ENCODE measurements at regions of chrX and their contacts with region 1.

Region 1: DNA sequence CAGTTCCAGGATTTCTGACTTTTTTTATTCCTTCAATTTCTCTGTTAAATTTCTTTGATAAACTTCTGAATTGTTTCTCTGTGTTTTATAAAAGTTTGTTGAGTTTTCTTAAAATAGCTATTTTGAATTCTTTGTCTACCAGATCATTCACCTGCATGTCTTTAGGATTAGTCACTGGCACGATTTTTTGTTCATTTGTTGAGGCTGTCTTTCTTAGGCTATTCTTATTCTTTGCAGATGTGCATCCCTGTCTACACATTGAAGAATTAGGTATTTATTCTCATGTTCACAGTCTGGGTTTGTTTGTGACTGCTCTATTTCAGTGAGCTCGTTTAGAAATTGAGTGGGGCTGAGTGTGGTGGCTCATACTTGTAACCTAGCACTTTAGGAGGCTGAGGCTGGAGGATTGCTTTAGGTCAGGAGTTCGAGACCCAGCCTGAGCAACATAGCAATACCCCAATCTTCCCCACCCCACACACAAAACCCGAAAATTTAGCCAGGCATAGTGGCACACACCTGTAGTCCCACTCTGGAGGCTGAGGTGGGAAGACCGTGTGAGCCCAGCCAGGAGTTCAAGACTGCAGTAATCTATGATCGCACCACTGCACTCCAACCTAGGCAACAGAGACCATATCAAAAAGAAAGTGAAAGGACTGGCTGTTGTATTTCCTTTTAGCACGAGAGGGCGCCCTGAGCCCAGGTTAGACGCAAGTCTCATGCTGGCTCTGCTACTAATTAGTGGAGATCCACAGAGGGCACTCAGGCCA is 42.0 kb downstream of the F8 start:
- DNase-seq: peak; percentile 45
- ATAC-seq: peak; percentile 98
- H3K4me3 ChIP-seq: peak overlapping the region; percentile 25 to 51
- H3K27ac ChIP-seq: no peak overlapping the region
- H3K4me1 ChIP-seq: peaks cover 0 to 10% of the 10 kb centered on the region in 2 experiments; a peak in 1 of 4 replicates
- H3K27me3 ChIP-seq: no peaks in the 10 kb centered on the region
- CTCF ChIP-seq: peak; percentile 51 to 95 (median 66)
- POLR2A ChIP-seq: no peak
- RAD21 ChIP-seq: peak; percentile 92

Region 2: DNA sequence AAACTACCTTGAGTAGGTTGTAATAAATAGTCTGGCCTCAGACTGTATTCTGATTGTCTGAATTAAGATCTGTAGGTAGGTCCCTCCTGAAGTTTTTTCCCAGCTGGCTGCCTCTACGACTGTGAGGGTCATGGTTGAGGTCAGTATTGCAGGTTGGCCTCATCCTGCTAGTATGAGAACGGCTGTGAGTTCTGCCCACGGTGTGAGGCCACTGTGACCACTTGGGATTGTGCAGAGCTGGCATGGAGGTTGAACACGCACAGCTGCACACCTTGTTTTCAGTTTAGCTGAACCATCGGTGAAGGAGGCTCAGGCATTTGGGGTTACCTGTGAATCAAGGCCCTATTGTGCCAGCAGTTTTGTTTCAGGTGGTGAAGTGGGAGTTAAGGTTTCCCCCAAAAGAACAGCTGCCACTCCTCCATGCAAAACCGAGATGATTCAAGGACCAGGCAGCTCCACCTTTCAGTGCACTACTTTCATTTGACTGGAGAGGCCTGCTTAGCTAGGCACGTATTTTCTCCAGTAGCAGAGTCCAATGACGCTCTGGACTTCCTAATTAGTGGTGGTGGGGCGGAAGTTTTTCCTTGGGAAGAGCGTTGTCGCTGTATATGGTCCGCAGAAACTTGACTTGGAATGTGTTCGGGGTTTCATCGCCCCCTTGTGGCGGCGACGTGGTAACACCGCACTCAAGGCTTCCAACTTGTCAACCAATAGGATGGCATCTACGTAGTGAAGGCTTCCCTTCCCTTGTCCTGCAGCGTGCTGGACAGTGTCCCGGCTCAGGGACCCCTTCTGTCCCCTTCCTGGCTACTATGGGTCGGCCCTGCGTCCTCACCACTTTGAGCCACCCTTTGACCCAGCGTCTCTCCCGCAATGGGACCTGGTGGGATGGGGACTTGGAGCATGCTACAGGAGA is 76.6 kb after region 1 on chrX:
- CTCF ChIA-PET with region 1: no interaction called
- POLR2A ChIA-PET with region 1: no interaction called
- RAD21 ChIA-PET with region 1: no interaction called
- intact Hi-C with region 1: loop called (anchors 2 kb)
- DNase-seq: peak; percentile 51
- ATAC-seq: peak; percentile 97
- H3K4me3 ChIP-seq: peak overlapping the region in 1 of 2 experiments; percentile 30; a peak in 1 of 4 replicates
- H3K27ac ChIP-seq: no peak overlapping the region
- H3K4me1 ChIP-seq: peaks cover 2 to 9% of the 10 kb centered on the region in 2 experiments; a peak in 1 of 4 replicates
- H3K27me3 ChIP-seq: no peaks in the 10 kb centered on the region
- CTCF ChIP-seq: peak; percentile 52 to 62 (median 60); a peak in 5 of 6 replicates
- POLR2A ChIP-seq: no peak
- RAD21 ChIP-seq: peak; percentile 59

Region 3: GRCh38 chrX:155086202-155086840 is 105.8 kb after region 1 on chrX:
- CTCF ChIA-PET with region 1: no interaction called
- POLR2A ChIA-PET with region 1: no interaction called
- RAD21 ChIA-PET with region 1: no interaction called
- intact Hi-C with region 1: loop called (anchors 1 kb)
- DNase-seq: peak; percentile 31
- ATAC-seq: peak; percentile 87
- H3K4me3 ChIP-seq: no peak overlapping the region
- H3K27ac ChIP-seq: no peak overlapping the region
- H3K4me1 ChIP-seq: no peaks in the 10 kb centered on the region
- H3K27me3 ChIP-seq: no peaks in the 10 kb centered on the region
- CTCF ChIP-seq: peak; percentile 30 to 59 (median 50); a peak in 5 of 6 replicates
- POLR2A ChIP-seq: no peak
- RAD21 ChIP-seq: peak; percentile 52

Region 4: DNA sequence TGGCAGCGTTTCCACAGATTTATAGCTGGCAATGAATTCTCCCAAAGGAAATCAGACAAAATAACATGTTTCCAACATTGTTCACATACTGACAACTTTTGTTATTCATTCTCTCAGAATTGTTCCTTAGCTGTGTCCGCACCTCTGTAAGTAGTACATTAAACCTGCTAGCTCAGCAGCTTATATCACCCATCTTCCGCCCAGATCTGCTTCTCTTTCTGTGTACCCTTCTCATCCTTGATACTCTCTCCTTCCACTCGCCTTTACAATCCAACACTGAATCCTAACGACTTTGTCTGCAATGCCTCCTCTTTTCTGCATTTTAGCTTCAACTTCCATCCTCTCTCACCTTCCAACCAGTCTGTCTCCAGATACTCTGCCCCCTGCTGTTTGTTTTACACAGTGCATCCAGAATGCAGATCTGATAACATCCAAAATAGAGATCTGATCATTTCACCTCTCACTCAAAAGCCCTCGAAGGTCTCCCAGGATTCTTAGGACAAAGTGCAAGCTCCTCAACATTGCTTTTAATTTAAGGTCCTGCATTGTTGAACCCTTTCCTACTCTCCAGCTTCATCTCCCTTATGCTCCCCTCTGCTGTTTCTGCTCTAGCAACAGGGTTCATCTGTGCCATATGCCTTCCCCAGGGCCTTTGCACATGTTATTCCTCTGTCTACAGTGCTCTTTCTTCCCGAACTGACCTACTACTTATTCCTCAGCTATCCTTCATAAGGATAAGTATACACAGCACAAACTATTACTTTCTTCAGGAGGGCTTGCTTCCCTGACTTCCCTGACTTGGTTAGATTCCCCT is 168.4 kb after region 1 on chrX:
- CTCF ChIA-PET with region 1: interaction called, 4 read pairs
- POLR2A ChIA-PET with region 1: no interaction called
- RAD21 ChIA-PET with region 1: no interaction called
- intact Hi-C with region 1: loop called (anchors 2 kb)
- DNase-seq: no peak
- ATAC-seq: peak; percentile 72; the same call in 1 of the 2 replicates
- H3K4me3 ChIP-seq: no peak overlapping the region
- H3K27ac ChIP-seq: no peak overlapping the region
- H3K4me1 ChIP-seq: no peaks in the 10 kb centered on the region
- H3K27me3 ChIP-seq: no peaks in the 10 kb centered on the region
- CTCF ChIP-seq: peak; percentile 42 to 68 (median 62); a peak in 5 of 6 replicates
- POLR2A ChIP-seq: no peak
- RAD21 ChIP-seq: peak; percentile 33; the same call in 1 of the 2 replicates

Region 5: DNA sequence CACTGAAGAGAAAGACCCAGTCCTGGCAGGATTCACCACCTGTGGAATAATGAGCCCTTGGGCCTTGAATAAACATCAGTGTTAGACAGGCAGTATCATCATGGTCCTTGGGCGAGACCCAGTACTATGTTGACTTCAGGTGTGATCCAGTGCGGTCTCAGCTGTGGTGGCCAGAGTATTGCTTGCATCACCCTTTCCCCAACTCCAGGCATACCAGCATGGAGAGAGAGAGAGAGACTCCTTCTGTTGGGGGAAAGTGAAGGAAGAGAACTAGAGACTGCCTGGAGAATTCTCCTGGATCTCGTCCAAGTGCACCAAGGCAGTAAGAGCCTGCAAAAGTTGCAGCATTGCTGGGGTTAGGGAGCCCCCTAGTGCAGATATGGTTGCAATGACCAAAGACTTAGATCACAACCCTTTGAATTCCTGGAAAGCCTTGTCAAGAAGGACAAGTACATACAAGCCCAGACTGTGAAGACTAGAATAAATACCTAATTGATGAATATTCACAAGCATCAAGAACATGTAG is 839.5 kb after region 1 on chrX:
- CTCF ChIA-PET with region 1: no interaction called
- POLR2A ChIA-PET with region 1: no interaction called
- RAD21 ChIA-PET with region 1: no interaction called
- intact Hi-C with region 1: loop called (anchors 2 kb)
- DNase-seq: peak; percentile 75
- ATAC-seq: peak; percentile 94
- H3K4me3 ChIP-seq: no peak overlapping the region
- H3K27ac ChIP-seq: no peak overlapping the region
- H3K4me1 ChIP-seq: peaks cover 0 to 5% of the 10 kb centered on the region in 2 experiments; a peak in 1 of 4 replicates
- H3K27me3 ChIP-seq: no peaks in the 10 kb centered on the region
- CTCF ChIP-seq: peak; percentile 58 to 67 (median 62); a peak in 5 of 6 replicates
- POLR2A ChIP-seq: no peak
- RAD21 ChIP-seq: peak; percentile 92

Measured in HCT116 (cell line).